Head of caudate nucleus (tissue), 42 donors: ENCODE measurements at regions of chr2 and their contacts with region 1.

Region 1: GRCh38 chr2:177263451-177264208 is 897 bp downstream of the NFE2L2 start:
- DNase-seq: peak; percentile 92 to 99 (median 97)

Region 2: DNA sequence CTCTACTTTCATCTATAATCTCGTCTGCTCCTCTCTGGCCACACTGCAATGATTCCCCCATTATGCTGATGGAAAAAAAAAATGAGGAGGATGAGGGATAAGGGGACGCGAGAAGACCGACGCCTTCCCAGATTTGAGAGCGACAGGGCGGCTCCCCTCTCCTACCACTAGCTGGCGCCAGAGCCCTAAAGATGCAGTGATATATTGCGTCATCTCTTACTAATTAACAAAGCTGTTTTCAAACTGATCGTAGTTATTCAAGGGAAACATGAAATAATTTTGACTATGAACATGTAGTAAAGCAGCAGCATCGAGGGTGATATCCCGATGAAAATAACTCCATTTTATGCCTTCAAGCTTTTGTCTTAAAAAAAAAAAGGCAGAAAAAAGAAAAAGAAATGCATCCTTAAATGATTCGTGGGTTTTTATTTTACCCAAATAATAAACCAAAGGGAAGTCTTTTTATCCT is 99.0 kb before region 1 on chr2:
- intact Hi-C with region 1: loop called (anchors 5 kb)
- DNase-seq: peak; percentile 81 to 96 (median 90)

Region 3: DNA sequence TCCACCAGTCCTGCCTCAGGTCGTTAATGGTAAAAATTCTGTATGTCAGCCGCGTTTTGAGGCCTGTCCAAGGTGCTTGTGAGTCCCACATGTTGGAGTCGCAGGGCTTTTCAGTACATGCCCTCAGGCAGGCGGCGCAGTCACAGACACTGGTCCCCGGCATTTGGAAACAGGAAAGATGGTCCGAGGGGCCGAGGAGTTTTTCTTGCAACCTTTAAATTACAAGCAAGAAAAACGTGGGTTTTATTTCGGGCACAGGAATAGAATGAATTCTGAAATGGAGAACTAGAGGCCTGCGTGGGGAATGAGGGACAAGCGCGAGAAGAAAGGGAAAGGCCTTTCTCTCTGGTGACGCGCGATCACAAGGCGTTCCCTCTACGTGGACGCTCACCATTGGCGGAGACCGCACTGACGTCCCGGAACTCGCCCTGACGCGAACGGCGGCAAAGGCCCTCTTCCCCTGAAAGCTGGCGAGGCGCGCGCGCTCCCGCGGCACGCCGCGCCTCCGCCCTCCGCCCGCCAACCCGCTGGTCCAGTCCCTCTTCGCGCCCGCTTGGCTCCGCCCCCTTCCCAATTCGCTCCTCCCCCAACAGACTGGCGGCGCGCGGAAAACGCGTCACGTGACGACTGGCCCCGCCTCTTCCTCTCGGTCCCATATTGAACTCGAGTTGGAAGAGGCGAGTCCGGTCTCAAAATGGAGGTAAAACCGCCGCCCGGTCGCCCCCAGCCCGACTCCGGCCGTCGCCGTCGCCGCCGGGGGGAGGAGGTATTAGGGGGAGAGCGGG is 51.3 kb before region 1 on chr2 and contains the start of gene HNRNPA3:
- intact Hi-C with region 1: loop called (anchors 1 kb)
- DNase-seq: peak; percentile 98 to 100 (median 99)

Region 4: GRCh38 chr2:177392373-177393202 is 129.0 kb after region 1 on chr2 and contains the start of gene AGPS:
- intact Hi-C with region 1: loop called (anchors 10 kb)
- DNase-seq: peak; percentile 51 to 92 (median 84)